IMR-90 (cell line): ENCODE measurements at regions of chr13 and their contacts with region 1.

Region 1: GRCh38 chr13:65435590-65435989 is 1794.5 kb downstream of the PCDH9 start:
- DNase-seq: no peak
- ATAC-seq: no peak
- H3K4me3 ChIP-seq: no peak overlapping the region
- H3K27ac ChIP-seq: no peak overlapping the region
- H3K4me1 ChIP-seq: no peaks in the 10 kb centered on the region
- H3K27me3 ChIP-seq: no peaks in the 10 kb centered on the region
- CTCF ChIP-seq: no peak
- POLR2A ChIP-seq: no peak
- RAD21 ChIP-seq: no peak

Region 2: GRCh38 chr13:64758521-64759244 is 676.9 kb before region 1 on chr13:
- CTCF ChIA-PET with region 1: no interaction called
- POLR2A ChIA-PET with region 1: no interaction called
- dilution Hi-C with region 1: no loop called
- in situ Hi-C with region 1: no loop called
- intact Hi-C with region 1: loop called (anchors 5 kb)
- DNase-seq: peak; percentile 1
- ATAC-seq: no peak
- H3K4me3 ChIP-seq: no peak overlapping the region
- H3K27ac ChIP-seq: no peak overlapping the region
- H3K4me1 ChIP-seq: no peaks in the 10 kb centered on the region
- H3K27me3 ChIP-seq: no peaks in the 10 kb centered on the region
- CTCF ChIP-seq: no peak
- POLR2A ChIP-seq: no peak
- RAD21 ChIP-seq: no peak

Region 3: GRCh38 chr13:65530688-65531087 is 95.1 kb after region 1 on chr13:
- CTCF ChIA-PET with region 1: no interaction called
- POLR2A ChIA-PET with region 1: no interaction called
- dilution Hi-C with region 1: no loop called
- in situ Hi-C with region 1: no loop called
- intact Hi-C with region 1: no loop called
- DNase-seq: no peak
- ATAC-seq: no peak
- H3K4me3 ChIP-seq: no peak overlapping the region
- H3K27ac ChIP-seq: no peak overlapping the region
- H3K4me1 ChIP-seq: no peaks in the 10 kb centered on the region
- H3K27me3 ChIP-seq: no peaks in the 10 kb centered on the region
- CTCF ChIP-seq: no peak
- POLR2A ChIP-seq: no peak
- RAD21 ChIP-seq: no peak

Region 4: GRCh38 chr13:66113882-66114526 is 678.4 kb after region 1 on chr13:
- CTCF ChIA-PET with region 1: no interaction called
- POLR2A ChIA-PET with region 1: no interaction called
- dilution Hi-C with region 1: no loop called
- in situ Hi-C with region 1: no loop called
- intact Hi-C with region 1: no loop called
- DNase-seq: peak; percentile 0
- ATAC-seq: no peak
- H3K4me3 ChIP-seq: no peak overlapping the region
- H3K27ac ChIP-seq: no peak overlapping the region
- H3K4me1 ChIP-seq: no peaks in the 10 kb centered on the region
- H3K27me3 ChIP-seq: no peaks in the 10 kb centered on the region
- CTCF ChIP-seq: no peak
- POLR2A ChIP-seq: no peak
- RAD21 ChIP-seq: no peak